ENCODE measurements at regions of chr7 and their contacts with region 1.

Region 1: DNA sequence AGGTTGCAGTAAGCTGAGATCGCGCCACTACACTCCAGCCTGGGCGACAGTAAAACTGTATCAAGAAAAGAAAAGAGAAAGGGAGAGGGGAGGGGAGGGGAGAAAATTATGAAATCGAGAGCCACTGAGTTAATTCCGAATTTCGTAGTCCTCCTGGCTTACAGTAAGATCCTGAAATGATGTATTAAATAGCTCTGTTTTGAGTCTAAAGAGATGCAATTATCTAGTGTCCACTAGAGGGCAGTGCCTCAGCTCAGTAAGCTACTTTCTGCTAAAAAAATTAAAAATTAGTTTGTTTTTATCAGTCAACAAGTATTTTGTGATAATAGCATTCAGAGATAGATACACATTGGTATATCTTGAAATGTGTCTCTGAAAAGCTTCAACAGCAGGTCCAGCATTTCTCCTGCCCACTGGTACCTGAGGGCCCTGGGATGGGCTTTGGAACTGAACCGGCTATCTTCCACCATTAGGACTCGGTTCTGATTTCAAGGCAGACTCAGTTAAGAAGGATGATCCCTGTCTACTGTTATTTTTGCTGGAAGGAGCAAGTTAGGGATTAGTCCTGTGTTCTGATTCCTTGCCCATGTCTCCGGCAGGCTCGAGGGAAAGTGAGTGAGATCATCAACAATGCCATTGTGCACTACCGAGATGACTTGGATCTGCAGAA is 19.5 kb downstream of the TSPAN33 start:
- DNase-seq: peak; percentile 61
- H3K4me3 ChIP-seq: no peak overlapping the region
- H3K27ac ChIP-seq: no peak overlapping the region
- H3K4me1 ChIP-seq: no peaks in the 10 kb centered on the region
- H3K27me3 ChIP-seq: peaks cover 15 to 19% of the 10 kb centered on the region in 2 experiments
- CTCF ChIP-seq: peak; percentile 56 to 61
- POLR2A ChIP-seq: no peak

Region 2: GRCh38 chr7:129091484-129092002 is 72.5 kb before region 1 on chr7:
- CTCF ChIA-PET with region 1: interaction called, 17 read pairs
- POLR2A ChIA-PET with region 1: no interaction called
- dilution Hi-C with region 1: no loop called
- intact Hi-C with region 1: no loop called
- DNase-seq: peak; percentile 80
- H3K4me3 ChIP-seq: no peak overlapping the region
- H3K27ac ChIP-seq: no peak overlapping the region
- H3K4me1 ChIP-seq: no peaks in the 10 kb centered on the region
- H3K27me3 ChIP-seq: peaks cover 6 to 8% of the 10 kb centered on the region in 2 experiments
- CTCF ChIP-seq: peak; percentile 97 to 98
- POLR2A ChIP-seq: no peak

Region 3: GRCh38 chr7:129136887-129137642 is 26.9 kb before region 1 on chr7:
- CTCF ChIA-PET with region 1: interaction called, 15 read pairs
- POLR2A ChIA-PET with region 1: no interaction called
- dilution Hi-C with region 1: no loop called
- intact Hi-C with region 1: no loop called
- DNase-seq: peak; percentile 31
- H3K4me3 ChIP-seq: no peak overlapping the region
- H3K27ac ChIP-seq: no peak overlapping the region
- H3K4me1 ChIP-seq: peaks cover 4% of the 10 kb centered on the region
- H3K27me3 ChIP-seq: peaks cover 0 to 6% of the 10 kb centered on the region in 2 experiments
- CTCF ChIP-seq: no peak
- POLR2A ChIP-seq: no peak

Region 4: GRCh38 chr7:129176916-129177710 is 13.1 kb after region 1 on chr7:
- CTCF ChIA-PET with region 1: interaction called, 56 read pairs
- POLR2A ChIA-PET with region 1: no interaction called
- dilution Hi-C with region 1: no loop called
- intact Hi-C with region 1: no loop called
- DNase-seq: no peak
- H3K4me3 ChIP-seq: no peak overlapping the region
- H3K27ac ChIP-seq: no peak overlapping the region
- H3K4me1 ChIP-seq: no peaks in the 10 kb centered on the region
- H3K27me3 ChIP-seq: peaks cover 14 to 20% of the 10 kb centered on the region in 2 experiments
- CTCF ChIP-seq: no peak
- POLR2A ChIP-seq: no peak

Region 5: GRCh38 chr7:129202058-129202777 is 38.2 kb after region 1 on chr7:
- CTCF ChIA-PET with region 1: interaction called, 465 read pairs
- POLR2A ChIA-PET with region 1: no interaction called
- dilution Hi-C with region 1: no loop called
- intact Hi-C with region 1: no loop called
- DNase-seq: no peak
- H3K4me3 ChIP-seq: no peak overlapping the region
- H3K27ac ChIP-seq: no peak overlapping the region
- H3K4me1 ChIP-seq: no peaks in the 10 kb centered on the region
- H3K27me3 ChIP-seq: no peaks in the 10 kb centered on the region
- CTCF ChIP-seq: no peak
- POLR2A ChIP-seq: no peak

Region 6: GRCh38 chr7:129298268-129298893 is 134.4 kb after region 1 on chr7:
- CTCF ChIA-PET with region 1: interaction called, 17 read pairs
- POLR2A ChIA-PET with region 1: no interaction called
- dilution Hi-C with region 1: no loop called
- intact Hi-C with region 1: no loop called
- DNase-seq: peak; percentile 66
- H3K4me3 ChIP-seq: no peak overlapping the region
- H3K27ac ChIP-seq: no peak overlapping the region
- H3K4me1 ChIP-seq: no peaks in the 10 kb centered on the region
- H3K27me3 ChIP-seq: no peaks in the 10 kb centered on the region
- CTCF ChIP-seq: peak; percentile 54 to 56
- POLR2A ChIP-seq: no peak

Measured in endothelial cell of umbilical vein (primary cell).